ENCODE measurements at regions of chrX and their contacts with region 1.

Region 1: DNA sequence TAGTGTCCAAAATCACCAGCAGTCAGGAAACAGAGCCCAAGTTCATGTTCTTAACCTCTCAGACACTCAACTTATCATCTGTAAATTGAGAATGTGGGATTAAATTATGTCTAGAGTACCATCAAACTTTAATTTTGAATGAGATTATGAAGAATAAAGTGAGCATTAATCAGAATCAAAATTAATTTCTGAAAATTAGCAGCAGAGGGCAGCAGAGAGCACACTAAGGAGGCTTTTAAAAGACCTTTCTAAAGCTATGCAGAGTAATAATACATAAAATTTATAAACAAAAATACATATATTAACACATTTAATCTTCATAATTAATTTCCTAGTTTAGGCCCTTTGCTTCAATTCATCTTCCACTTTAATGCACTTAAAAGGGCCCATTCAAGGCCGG is 7.1 kb downstream of the TASL start:
- DNase-seq: peak in 1 of 2 experiments; percentile 25
- ATAC-seq: 0 out of 6 replicates have a peak, but pooled peaks of 1 of the 2 experiments have one; percentile 38
- H3K4me3 ChIP-seq: no peak overlapping the region
- H3K27ac ChIP-seq: no peak overlapping the region
- H3K4me1 ChIP-seq: no peaks in the 10 kb centered on the region
- CTCF ChIP-seq: peak; percentile 58
- EP300 ChIP-seq: no peak
- POLR2A ChIP-seq: no peak
- RAD21 ChIP-seq: peak; percentile 33 to 45; a peak in 4 of 5 replicates

Region 2: DNA sequence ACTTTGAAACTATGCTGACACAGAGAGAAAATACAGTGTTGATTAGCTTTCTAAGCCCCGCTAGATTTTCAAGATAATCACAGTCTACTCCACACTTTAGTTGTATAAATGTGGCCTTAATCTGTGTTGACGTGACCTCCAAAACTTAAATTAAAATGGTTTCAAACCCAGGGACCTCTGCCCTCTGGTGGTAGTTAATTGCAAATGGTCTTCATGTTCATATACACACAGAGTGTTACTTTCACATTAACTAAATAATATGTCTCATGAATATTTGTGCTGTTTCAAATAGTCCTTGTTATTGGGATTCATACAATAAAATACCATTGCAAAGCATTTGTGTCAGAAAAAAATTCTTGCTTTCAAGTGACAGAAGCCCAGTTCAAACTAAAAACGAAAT is 57.2 kb before region 1 on chrX:
- CTCF ChIA-PET with region 1: no interaction called
- POLR2A ChIA-PET with region 1: no interaction called
- DNase-seq: peak in 1 of 2 experiments; percentile 16
- ATAC-seq: peak; percentile 34 to 50; a peak in 2 of 6 replicates
- H3K4me3 ChIP-seq: no peak overlapping the region
- H3K27ac ChIP-seq: no peak overlapping the region
- H3K4me1 ChIP-seq: no peaks in the 10 kb centered on the region
- CTCF ChIP-seq: peak; percentile 50
- EP300 ChIP-seq: no peak
- POLR2A ChIP-seq: no peak
- RAD21 ChIP-seq: no peak; a peak in 1 of 5 replicates

Region 3: DNA sequence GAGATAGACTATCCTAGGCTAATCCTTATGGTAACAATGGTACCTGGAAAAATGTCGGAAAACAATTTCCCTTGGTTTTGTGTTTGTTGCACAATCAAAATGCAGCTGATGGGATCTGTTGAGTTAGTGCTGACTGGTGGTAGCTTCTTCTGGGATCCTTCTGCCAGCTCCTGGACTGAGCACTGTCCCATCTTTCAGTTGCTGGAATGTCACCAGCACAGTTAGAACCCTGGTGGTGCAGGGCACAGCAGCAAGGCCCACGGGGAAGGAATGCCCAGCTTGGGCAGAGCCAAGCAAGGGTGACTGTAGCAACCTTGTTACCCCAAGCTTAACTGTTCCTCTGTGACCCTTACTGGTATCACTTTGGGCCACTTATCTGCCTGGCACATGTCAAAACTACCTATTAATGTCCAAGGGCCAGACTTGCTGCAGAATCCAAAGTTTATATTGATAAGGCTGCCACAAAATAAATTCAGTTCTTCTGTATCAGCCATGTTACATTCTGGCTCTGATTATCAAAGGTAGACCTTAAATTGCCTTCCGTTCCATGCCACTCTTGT is 135.8 kb after region 1 on chrX:
- CTCF ChIA-PET with region 1: interaction called, 10 read pairs
- POLR2A ChIA-PET with region 1: interaction called, 4 read pairs
- DNase-seq: no peak
- ATAC-seq: no peak
- H3K4me3 ChIP-seq: no peak overlapping the region
- H3K27ac ChIP-seq: no peak overlapping the region
- H3K4me1 ChIP-seq: no peaks in the 10 kb centered on the region
- CTCF ChIP-seq: no peak
- EP300 ChIP-seq: no peak
- POLR2A ChIP-seq: no peak
- RAD21 ChIP-seq: no peak

Region 4: DNA sequence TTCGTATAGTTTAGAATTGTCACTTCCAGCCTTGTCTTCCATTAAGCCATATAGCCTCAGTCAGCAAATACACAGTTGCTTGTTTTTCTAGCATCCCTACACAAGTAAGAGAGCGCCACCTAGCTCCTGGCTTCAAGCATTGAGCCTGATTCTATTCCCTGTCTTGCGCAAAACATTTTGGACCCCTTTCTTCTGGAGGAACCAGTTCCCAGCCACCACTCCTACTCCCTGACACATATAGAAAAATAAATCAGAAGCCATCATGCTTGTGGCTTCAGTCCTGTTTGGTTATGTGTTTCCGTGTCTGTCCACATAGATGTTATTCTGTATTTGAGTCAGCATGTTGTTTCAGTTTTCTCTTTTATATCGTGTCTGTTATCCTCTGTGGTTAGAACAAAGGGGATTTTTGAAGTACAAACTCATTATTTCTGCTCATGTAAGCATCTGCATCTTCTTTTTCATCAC is 142.6 kb after region 1 on chrX:
- CTCF ChIA-PET with region 1: interaction called, 16 read pairs
- POLR2A ChIA-PET with region 1: no interaction called
- DNase-seq: peak; percentile 18 to 71
- ATAC-seq: peak; percentile 64 to 88; a peak in 5 of 6 replicates
- H3K4me3 ChIP-seq: no peak overlapping the region
- H3K27ac ChIP-seq: no peak overlapping the region
- H3K4me1 ChIP-seq: no peaks in the 10 kb centered on the region
- CTCF ChIP-seq: peak; percentile 64
- EP300 ChIP-seq: no peak
- POLR2A ChIP-seq: no peak
- RAD21 ChIP-seq: peak; percentile 70 to 85

Measured in A549 (cell line).